Left colon (tissue), 2 donors: ENCODE measurements at regions of chrX and their contacts with region 1.

Region 1: GRCh38 chrX:7996414-7996813 is 69.2 kb upstream of the PNPLA4 start:
- DNase-seq: peak in 1 of 2 donors; percentile 23
- ATAC-seq: peak; percentile 67

Region 2: GRCh38 chrX:7841084-7841805 is 155.2 kb before region 1 on chrX:
- intact Hi-C with region 1: no loop called
- DNase-seq: no peak
- ATAC-seq: no peak

Region 3: GRCh38 chrX:8084006-8084405 is 87.6 kb after region 1 on chrX:
- intact Hi-C with region 1: no loop called
- DNase-seq: no peak
- ATAC-seq: no peak

Region 4: GRCh38 chrX:8738588-8739189 is 742.3 kb after region 1 on chrX:
- intact Hi-C with region 1: loop called in 1 of 2 experiments (anchors 5 kb)
- DNase-seq: peak in 1 of 2 donors; percentile 50
- ATAC-seq: no peak

Region 5: DNA sequence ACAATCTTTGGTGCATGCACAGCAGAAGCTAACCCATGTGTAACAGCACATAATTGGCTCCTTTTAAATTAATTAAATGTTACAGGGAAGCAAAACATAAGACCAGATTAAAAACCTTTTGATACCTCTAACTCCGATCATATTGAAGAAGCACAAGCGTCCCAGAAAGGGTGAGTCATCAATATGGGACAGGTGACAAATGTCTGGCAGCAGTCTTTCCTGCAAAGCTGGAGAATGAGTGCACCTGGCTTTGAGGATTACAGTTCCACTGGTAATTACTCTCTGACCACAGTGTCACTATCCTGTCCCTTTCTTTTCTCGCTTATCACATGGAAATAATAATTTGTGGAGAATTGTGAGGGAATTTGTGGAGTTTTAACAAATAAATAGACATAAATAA is 942.9 kb after region 1 on chrX:
- intact Hi-C with region 1: no loop called
- DNase-seq: no peak
- ATAC-seq: no peak